ENCODE measurements at regions of chr7 and their contacts with region 1.

Region 1: GRCh38 chr7:10257438-10257837 is 716.2 kb upstream of the PHF14 start:
- DNase-seq: no peak
- ATAC-seq: no peak
- H3K4me3 ChIP-seq: no peak overlapping the region
- H3K4me1 ChIP-seq: no peaks in the 10 kb centered on the region
- CTCF ChIP-seq: no peak

Region 2: GRCh38 chr7:10138087-10138854 is 119.2 kb before region 1 on chr7:
- intact Hi-C with region 1: loop called in 1 of 2 experiments (anchors 5 kb)
- DNase-seq: no peak
- ATAC-seq: no peak
- H3K4me3 ChIP-seq: no peak overlapping the region
- H3K4me1 ChIP-seq: no peaks in the 10 kb centered on the region
- CTCF ChIP-seq: no peak

Measured in mucosa of descending colon (tissue), 3 donors.